ENCODE measurements at regions of chr1 and their contacts with region 1.

Region 1: GRCh38 chr1:18902523-18903290 is at the start of gene ALDH4A1:
- DNase-seq: peak; percentile 98 to 99 (median 98)
- ATAC-seq: peak; percentile 97 to 98 (median 97)
- H3K4me3 ChIP-seq: peak within 1 kb of the TSS; percentile 60 to 97 (median 85)
- H3K27ac ChIP-seq: peak within 1 kb of the TSS; percentile 74 to 95 (median 92)
- H3K4me1 ChIP-seq: peaks cover 0 to 38% (median 24%) of the 10 kb centered on the region in 12 donors
- H3K27me3 ChIP-seq: no peaks in the 10 kb centered on the region
- CTCF ChIP-seq: peak in 2 of 12 donors; percentile 13 to 28
- POLR2A ChIP-seq: peak in 1 of 2 donors; percentile 58
- total RNA-seq, gene ALDH4A1: 20.8 to 57.6 (median 30.6) TPM

Region 2: GRCh38 chr1:18938008-18938706 is 35.5 kb after region 1 on chr1:
- intact Hi-C with region 1: no loop called
- DNase-seq: no peak
- ATAC-seq: peak in 3 of 4 donors; percentile 13 to 25 (median 21)
- H3K4me3 ChIP-seq: no peak overlapping the region
- H3K27ac ChIP-seq: no peak overlapping the region
- H3K4me1 ChIP-seq: peaks cover 7 to 53% (median 44%) of the 10 kb centered on the region in 12 donors
- H3K27me3 ChIP-seq: no peaks in the 10 kb centered on the region
- CTCF ChIP-seq: no peak
- POLR2A ChIP-seq: no peak

Region 3: DNA sequence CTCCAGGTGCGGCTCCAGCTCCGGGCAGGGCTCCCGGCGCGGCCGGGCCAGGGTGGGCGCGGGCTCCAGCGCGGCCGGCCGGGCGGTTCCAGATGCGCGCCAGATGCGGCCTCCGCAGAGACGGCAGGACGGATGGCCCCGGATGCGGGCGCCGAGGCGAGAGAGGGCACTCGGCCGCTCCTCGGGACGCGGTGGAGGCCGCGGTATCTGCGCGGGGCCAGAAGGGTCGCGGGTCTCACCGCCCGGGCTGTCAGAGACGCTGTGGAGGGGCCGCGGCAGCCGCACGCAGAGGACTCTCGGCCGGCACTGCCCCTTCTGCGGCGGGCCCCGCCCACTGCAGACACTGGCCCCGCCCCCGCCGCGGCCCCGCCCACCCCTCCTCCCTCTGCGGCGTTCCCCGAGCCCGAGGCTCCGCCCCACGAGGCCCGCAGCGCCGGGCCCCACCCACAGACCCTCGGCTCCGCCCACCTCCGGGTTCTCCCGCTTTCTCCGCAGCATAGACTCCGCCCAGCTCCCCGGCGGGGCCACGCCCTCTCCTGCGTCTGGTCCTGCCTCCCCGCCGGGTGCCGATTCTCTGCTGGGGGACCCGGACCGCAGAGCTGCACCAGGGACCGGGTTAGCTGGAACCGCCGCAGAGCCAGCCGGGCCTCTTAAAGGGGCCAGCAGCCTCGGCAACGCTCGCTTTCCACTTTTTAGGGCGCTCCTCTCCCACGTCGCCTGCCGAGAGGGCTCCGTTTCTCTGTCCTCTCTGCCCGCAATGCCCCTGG is 53.8 kb after region 1 on chr1 and contains the start of gene IFFO2:
- intact Hi-C with region 1: loop called in 6 of 10 experiments (anchors 2 to 10 kb)
- DNase-seq: peak; percentile 98 to 99 (median 98)
- ATAC-seq: peak; percentile 98 to 99 (median 98)
- H3K4me3 ChIP-seq: peak within 1 kb of the TSS; percentile 67 to 95 (median 79)
- H3K27ac ChIP-seq: peak within 1 kb of the TSS in 11 of 12 donors; percentile 54 to 88 (median 76)
- H3K4me1 ChIP-seq: peaks cover 0 to 43% (median 28%) of the 10 kb centered on the region in 12 donors
- H3K27me3 ChIP-seq: no peaks in the 10 kb centered on the region
- CTCF ChIP-seq: no peak
- POLR2A ChIP-seq: peak; percentile 88 to 96
- total RNA-seq, gene IFFO2: 3.1 to 9.0 (median 5.3) TPM

Region 4: DNA sequence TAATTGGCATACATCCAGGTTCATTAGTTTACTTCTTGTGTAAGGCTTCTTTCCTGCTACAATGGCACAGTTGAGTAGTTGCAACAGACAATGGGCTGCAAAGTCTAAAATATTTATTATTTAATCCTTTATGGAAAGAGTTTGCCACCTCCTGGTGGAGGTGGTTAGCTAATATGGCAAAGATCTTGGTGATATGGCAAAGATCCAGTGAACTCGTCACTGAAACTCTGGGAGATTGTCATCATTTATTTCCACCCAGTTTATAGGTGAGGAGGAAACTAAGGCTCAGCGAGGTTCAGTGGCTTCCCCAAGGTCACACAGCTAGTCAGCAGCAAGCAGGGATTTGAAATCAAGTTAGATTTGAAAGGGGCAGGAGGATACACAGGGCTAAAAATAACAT is 69.8 kb after region 1 on chr1:
- intact Hi-C with region 1: loop called in 5 of 10 experiments (anchors 2 to 10 kb)
- DNase-seq: no peak
- ATAC-seq: peak in 2 of 4 donors; percentile 18 to 41
- H3K4me3 ChIP-seq: no peak overlapping the region
- H3K27ac ChIP-seq: no peak overlapping the region
- H3K4me1 ChIP-seq: peaks cover 0 to 12% (median 0%) of the 10 kb centered on the region in 12 donors
- H3K27me3 ChIP-seq: no peaks in the 10 kb centered on the region
- CTCF ChIP-seq: peak in 11 of 12 donors; percentile 13 to 60 (median 42)
- POLR2A ChIP-seq: no peak

Region 5: DNA sequence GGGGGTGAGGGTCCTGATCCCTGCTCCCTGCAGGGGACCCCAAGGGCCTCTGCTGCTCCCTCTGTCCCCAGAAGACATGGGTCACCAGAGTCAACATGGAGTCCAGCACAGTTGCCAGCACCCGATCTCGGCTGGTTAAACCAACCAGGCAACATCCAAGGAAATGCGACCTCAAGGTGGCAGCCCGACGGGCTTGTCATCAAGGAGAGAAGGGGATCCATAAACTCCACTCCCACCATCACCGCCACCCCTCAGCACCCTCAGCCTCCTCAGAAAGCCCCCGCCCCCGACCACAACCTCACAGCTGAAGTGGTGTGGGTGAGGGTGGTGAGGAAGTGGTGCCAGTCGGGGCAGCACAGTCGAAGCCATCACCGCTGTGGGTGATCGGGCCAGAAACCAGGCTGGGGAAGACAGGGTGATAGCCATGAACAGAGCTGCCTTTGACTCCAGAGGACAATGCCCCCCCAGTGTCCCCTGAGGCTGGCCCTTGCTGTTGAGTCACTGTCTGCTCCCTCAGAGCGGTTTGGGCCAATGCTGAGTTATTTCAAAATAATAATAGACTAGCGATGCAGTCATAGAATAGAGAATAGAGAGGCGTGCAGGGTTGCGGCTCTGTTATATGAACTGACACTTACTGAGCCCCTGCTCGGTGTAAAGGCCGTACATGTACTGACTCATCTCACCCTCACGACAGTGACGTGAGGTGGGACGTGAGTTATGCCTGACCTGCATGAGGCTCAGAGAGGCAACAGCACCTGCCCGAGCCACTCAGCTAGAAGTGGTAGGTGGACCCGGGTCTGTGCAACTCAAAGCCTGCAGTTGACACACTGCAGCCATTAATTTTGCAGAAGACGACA is 142.5 kb after region 1 on chr1:
- intact Hi-C with region 1: no loop called
- DNase-seq: peak in 1 of 5 donors; percentile 24
- ATAC-seq: no peak
- H3K4me3 ChIP-seq: no peak overlapping the region
- H3K27ac ChIP-seq: no peak overlapping the region
- H3K4me1 ChIP-seq: no peaks in the 10 kb centered on the region
- H3K27me3 ChIP-seq: peaks cover 4 to 50% (median 19%) of the 10 kb centered on the region in 9 donors
- CTCF ChIP-seq: no peak
- POLR2A ChIP-seq: no peak

Region 6: GRCh38 chr1:19096036-19096833 is 193.5 kb after region 1 on chr1:
- intact Hi-C with region 1: loop called in 7 of 10 experiments (anchors 2 to 5 kb)
- DNase-seq: peak in 2 of 5 donors; percentile 47 to 49
- ATAC-seq: peak; percentile 64 to 85 (median 79)
- H3K4me3 ChIP-seq: no peak overlapping the region
- H3K27ac ChIP-seq: peak overlapping the region in 1 of 12 donors; percentile 20
- H3K4me1 ChIP-seq: peaks cover 0 to 14% (median 0%) of the 10 kb centered on the region in 12 donors
- H3K27me3 ChIP-seq: no peaks in the 10 kb centered on the region
- CTCF ChIP-seq: peak; percentile 35 to 70 (median 58)
- POLR2A ChIP-seq: no peak